GM12878 (cell line): ENCODE measurements at regions of chr10 and their contacts with region 1.

Region 1: DNA sequence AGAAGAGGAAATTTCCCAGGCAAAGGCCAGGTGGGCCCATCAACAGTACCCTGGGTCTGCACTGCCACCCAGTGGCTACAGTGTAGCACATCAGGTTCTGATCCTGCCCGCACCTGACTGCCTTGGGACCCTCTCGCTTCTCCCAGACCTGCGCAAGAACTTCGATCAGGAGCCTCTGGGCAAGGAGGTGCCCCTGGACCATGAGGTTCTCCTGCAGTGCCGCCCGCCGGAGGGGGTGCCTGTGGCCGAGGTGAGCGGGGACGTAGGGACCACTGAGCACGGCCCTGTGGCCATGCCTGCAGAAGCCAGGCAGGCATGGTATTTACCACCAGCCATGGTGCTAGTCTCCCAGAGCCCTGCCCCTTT is 33.9 kb upstream of the SLC29A3 start:
- DNase-seq: no peak
- ATAC-seq: peak; percentile 90
- H3K4me3 ChIP-seq: no peak overlapping the region
- H3K27ac ChIP-seq: no peak overlapping the region
- H3K4me1 ChIP-seq: no peaks in the 10 kb centered on the region
- H3K27me3 ChIP-seq: peaks cover 0 to 2% of the 10 kb centered on the region in 2 experiments; a peak in 1 of 4 replicates
- CTCF ChIP-seq: peak; percentile 52 to 77 (median 72)
- EP300 ChIP-seq: no peak
- POLR2A ChIP-seq: no peak
- RAD21 ChIP-seq: peak; percentile 60

Region 2: DNA sequence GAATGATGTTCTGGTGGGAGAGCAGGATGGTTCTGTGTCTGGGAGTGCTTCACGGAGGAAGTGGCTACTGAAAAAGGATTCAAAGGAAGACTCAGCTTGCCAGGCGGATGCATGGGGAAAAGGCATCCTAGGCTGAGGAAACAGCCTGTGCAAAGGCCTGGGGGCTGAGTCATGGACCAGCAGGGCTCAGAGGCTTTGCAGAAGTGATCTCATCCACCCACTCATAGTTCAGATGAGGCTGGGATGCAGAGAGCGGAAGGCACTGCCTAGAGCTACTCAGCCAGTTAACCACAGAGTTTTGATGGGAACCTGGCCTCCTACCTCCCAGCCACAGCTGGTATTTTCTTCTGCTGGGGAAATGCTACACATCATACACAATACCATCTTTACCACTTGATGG is 628.7 kb before region 1 on chr10:
- CTCF ChIA-PET with region 1: no interaction called
- POLR2A ChIA-PET with region 1: no interaction called
- RAD21 ChIA-PET with region 1: no interaction called
- SMC1A ChIA-PET with region 1: no interaction called
- in situ Hi-C with region 1: no loop called
- intact Hi-C with region 1: no loop called
- DNase-seq: peak; percentile 56
- ATAC-seq: peak; percentile 96
- H3K4me3 ChIP-seq: no peak overlapping the region
- H3K27ac ChIP-seq: no peak overlapping the region
- H3K4me1 ChIP-seq: peaks cover 16% of the 10 kb centered on the region
- H3K27me3 ChIP-seq: no peaks in the 10 kb centered on the region; a peak in 1 of 4 replicates
- CTCF ChIP-seq: no peak
- EP300 ChIP-seq: no peak
- POLR2A ChIP-seq: no peak
- RAD21 ChIP-seq: no peak

Region 3: DNA sequence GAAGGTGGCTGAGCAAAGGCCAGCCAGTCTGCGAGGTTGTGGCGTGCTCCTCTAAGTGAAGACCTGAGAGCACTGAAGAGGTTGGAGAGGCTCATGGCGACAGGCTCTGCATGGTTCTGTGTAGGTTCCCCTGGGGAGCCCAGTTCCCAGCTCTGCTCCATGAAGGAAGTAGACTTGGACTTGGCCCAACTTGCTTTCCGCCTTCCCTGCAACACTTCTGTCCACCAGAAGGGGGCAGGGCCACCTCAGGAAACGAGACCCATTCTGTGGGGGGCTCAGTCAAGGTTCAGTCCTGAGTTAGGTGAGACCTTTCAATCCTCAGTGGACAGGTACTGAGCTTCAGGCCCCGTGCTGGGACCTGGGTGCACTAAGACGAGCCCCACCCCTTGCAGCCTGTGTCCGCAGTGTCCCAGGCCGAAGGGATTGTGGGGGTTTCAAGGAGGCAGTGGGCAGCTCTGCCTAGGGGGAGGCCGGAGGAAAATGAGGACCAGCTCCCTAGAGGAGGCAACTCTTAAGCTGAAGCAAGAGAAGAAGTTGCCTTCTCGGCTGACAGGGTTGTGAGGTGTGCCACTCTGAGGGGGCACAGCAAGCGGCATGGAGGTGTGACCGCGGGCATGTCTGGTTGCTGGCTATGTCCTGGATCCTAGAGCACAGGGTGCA is 381.8 kb before region 1 on chr10:
- CTCF ChIA-PET with region 1: interaction called, 11 read pairs
- POLR2A ChIA-PET with region 1: no interaction called
- RAD21 ChIA-PET with region 1: no interaction called
- SMC1A ChIA-PET with region 1: no interaction called
- in situ Hi-C with region 1: no loop called
- intact Hi-C with region 1: loop called (anchors 2 kb)
- DNase-seq: no peak
- ATAC-seq: peak; percentile 64
- H3K4me3 ChIP-seq: no peak overlapping the region
- H3K27ac ChIP-seq: no peak overlapping the region
- H3K4me1 ChIP-seq: no peaks in the 10 kb centered on the region
- H3K27me3 ChIP-seq: peaks cover 2% of the 10 kb centered on the region in 2 experiments; a peak in 1 of 4 replicates
- CTCF ChIP-seq: peak; percentile 76 to 87 (median 82)
- EP300 ChIP-seq: no peak
- POLR2A ChIP-seq: no peak
- RAD21 ChIP-seq: peak; percentile 78

Region 4: DNA sequence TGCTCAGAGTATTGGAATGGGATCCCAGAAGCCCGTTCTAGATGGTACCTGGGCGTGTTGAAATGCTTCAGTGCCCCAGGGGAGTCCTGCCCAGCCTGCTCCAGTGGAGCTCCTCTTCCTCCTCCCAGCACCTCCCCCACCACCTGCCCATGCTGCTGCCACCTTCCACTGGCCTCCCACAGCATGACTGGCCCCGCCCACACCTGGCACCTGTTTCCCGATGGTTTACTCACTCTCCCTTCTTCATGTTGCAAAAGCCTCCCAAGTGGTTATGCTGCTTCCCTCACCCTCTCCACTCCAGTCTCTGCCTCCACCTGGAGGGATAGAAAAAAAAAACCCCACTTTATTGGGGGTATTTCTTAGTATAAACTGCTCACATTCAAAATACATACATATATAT is 364.6 kb before region 1 on chr10:
- CTCF ChIA-PET with region 1: no interaction called
- POLR2A ChIA-PET with region 1: no interaction called
- RAD21 ChIA-PET with region 1: no interaction called
- SMC1A ChIA-PET with region 1: no interaction called
- in situ Hi-C with region 1: loop called (anchors 5 kb)
- intact Hi-C with region 1: no loop called
- DNase-seq: no peak
- ATAC-seq: no peak
- H3K4me3 ChIP-seq: no peak overlapping the region
- H3K27ac ChIP-seq: no peak overlapping the region
- H3K4me1 ChIP-seq: no peaks in the 10 kb centered on the region
- H3K27me3 ChIP-seq: peaks cover 0 to 3% of the 10 kb centered on the region in 2 experiments; a peak in 3 of 4 replicates
- CTCF ChIP-seq: no peak
- EP300 ChIP-seq: no peak
- POLR2A ChIP-seq: no peak
- RAD21 ChIP-seq: no peak

Region 5: DNA sequence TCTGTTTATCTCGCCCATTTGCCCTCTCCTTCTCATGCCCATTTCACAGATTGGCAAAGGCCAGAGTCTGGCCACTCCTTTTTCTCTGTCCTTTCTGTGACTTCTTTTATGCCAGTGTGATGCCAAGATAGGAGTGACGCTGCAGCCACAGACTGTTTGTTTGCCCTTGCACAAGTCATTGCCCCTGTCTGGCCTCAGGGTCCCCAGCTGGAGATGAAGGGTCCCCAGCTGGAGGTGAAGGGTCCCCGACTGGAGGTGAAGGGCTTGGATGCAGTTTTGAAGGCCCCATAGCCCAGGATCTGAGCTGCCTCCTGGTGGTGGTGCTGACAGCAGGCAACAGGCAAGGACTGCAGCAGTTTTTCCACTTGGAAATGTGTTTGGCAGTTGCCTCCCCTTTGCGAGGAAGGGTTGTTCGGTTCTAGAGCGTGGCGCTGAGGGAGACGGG is 16.9 kb before region 1 on chr10:
- CTCF ChIA-PET with region 1: interaction called, 16 read pairs
- POLR2A ChIA-PET with region 1: no interaction called
- RAD21 ChIA-PET with region 1: no interaction called
- SMC1A ChIA-PET with region 1: no interaction called
- in situ Hi-C with region 1: no loop called
- intact Hi-C with region 1: no loop called
- DNase-seq: no peak
- ATAC-seq: no peak
- H3K4me3 ChIP-seq: no peak overlapping the region
- H3K27ac ChIP-seq: no peak overlapping the region
- H3K4me1 ChIP-seq: no peaks in the 10 kb centered on the region
- H3K27me3 ChIP-seq: peaks cover 0 to 2% of the 10 kb centered on the region in 2 experiments; a peak in 2 of 4 replicates
- CTCF ChIP-seq: 0 out of 6 replicates have a peak, but pooled peaks of 2 of the 3 experiments have one; percentile 3 to 8
- EP300 ChIP-seq: no peak
- POLR2A ChIP-seq: no peak
- RAD21 ChIP-seq: no peak